T-cell (primary cell): ENCODE measurements at regions of chr6 and their contacts with region 1.

Region 1: DNA sequence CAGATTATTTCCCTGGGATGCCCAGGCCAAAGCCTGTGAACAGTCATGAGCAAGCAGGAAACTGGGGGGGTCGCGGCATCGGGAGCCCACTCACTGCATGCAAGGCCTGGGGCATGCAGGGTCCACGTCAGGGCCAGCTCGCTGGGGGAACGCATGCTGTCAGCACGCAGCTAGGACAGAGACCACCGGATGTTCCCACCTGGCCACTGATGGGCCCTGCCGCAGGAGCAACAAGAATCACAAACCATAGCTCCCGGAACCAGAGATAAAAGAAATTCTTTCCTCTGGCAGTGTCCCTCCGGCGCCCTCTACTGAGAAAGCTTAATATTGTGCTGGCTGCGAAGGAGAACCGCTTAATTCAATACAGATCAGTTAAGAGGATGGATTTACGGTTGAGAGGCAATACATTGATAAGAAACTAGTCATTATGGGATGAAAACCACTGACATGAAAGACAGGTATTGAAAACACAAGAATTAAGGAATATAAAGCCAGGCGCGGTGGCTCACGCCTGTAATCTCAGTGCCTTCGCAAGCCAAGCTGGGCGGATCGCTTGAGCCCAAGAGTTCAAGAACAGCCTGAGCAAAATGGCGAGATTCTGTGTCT is 32.6 kb downstream of the C6orf15 start:
- DNase-seq: peak; percentile 21 to 81 (median 64)
- ATAC-seq: peak; percentile 86 to 93 (median 90)
- H3K4me3 ChIP-seq: peak overlapping the region; percentile 8 to 33
- H3K4me3 Mint-ChIP-seq: peak overlapping the region; percentile 43 to 56 (median 51)
- H3K27ac ChIP-seq: no peak overlapping the region
- H3K27ac Mint-ChIP-seq: no peak overlapping the region
- H3K4me1 ChIP-seq: peaks cover 2 to 8% of the 10 kb centered on the region in 2 experiments
- H3K4me1 Mint-ChIP-seq: peaks cover 7 to 9% (median 8%) of the 10 kb centered on the region in 3 donors
- H3K27me3 ChIP-seq: peaks cover 0 to 8% of the 10 kb centered on the region in 2 experiments
- H3K27me3 Mint-ChIP-seq: no peaks in the 10 kb centered on the region

Region 2: GRCh38 chr6:29602564-29603361 is 1477.0 kb before region 1 on chr6:
- CTCF ChIA-PET with region 1: no interaction called
- POLR2A ChIA-PET with region 1: no interaction called
- DNase-seq: peak in 1 of 35 experiments; percentile 6
- ATAC-seq: no peak
- H3K4me3 ChIP-seq: no peak overlapping the region
- H3K4me3 Mint-ChIP-seq: no peak overlapping the region
- H3K27ac ChIP-seq: no peak overlapping the region
- H3K27ac Mint-ChIP-seq: no peak overlapping the region
- H3K4me1 ChIP-seq: no peaks in the 10 kb centered on the region
- H3K4me1 Mint-ChIP-seq: no peaks in the 10 kb centered on the region
- H3K27me3 ChIP-seq: no peaks in the 10 kb centered on the region
- H3K27me3 Mint-ChIP-seq: peaks cover 0 to 3% of the 10 kb centered on the region in 2 donors

Region 3: DNA sequence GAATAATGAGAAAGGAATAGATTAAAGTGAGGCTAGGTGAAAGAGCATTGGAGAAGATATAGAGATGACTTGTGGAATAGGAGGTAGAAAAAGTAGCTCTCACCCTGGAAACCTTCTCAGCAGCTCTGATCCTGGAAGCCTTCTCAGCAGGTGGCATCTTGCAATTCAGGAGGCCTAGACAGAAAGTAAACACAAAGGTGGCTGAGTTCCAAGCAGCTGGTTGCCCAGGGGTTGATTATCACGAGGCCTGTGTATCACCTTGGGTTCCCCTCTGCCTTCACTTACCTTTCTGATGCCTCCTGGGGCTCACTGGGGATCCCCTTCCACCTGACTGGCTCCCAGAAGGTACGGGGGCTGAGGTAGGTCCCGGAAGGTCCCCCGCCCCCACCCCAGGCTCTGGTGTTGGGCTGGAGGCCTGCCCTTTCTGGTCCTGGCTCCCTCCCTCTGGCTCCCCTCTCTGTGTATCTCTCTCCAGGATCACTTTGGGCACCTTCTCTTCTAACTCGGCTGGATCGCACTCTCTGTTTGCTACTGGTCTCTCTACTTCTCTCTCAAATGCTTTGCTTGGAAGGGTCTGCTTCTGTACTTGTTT is 372.4 kb before region 1 on chr6:
- CTCF ChIA-PET with region 1: no interaction called
- POLR2A ChIA-PET with region 1: no interaction called
- DNase-seq: no peak
- ATAC-seq: no peak
- H3K4me3 ChIP-seq: no peak overlapping the region
- H3K4me3 Mint-ChIP-seq: no peak overlapping the region
- H3K27ac ChIP-seq: no peak overlapping the region
- H3K27ac Mint-ChIP-seq: no peak overlapping the region
- H3K4me1 ChIP-seq: peaks cover 0 to 7% of the 10 kb centered on the region in 2 experiments
- H3K4me1 Mint-ChIP-seq: peaks cover 5 to 12% (median 10%) of the 10 kb centered on the region in 3 donors
- H3K27me3 ChIP-seq: no peaks in the 10 kb centered on the region
- H3K27me3 Mint-ChIP-seq: no peaks in the 10 kb centered on the region

Region 4: GRCh38 chr6:30828027-30828960 is 251.5 kb before region 1 on chr6:
- CTCF ChIA-PET with region 1: interaction called, 3 to 20 read pairs
- POLR2A ChIA-PET with region 1: no interaction called
- DNase-seq: peak; percentile 40 to 86 (median 73)
- ATAC-seq: peak; percentile 72 to 84 (median 74)
- H3K4me3 ChIP-seq: peak overlapping the region; percentile 70 to 71
- H3K4me3 Mint-ChIP-seq: peak overlapping the region; percentile 86 to 93 (median 92)
- H3K27ac ChIP-seq: peak overlapping the region; percentile 27
- H3K27ac Mint-ChIP-seq: peak overlapping the region; percentile 97 to 99
- H3K4me1 ChIP-seq: peaks cover 32 to 54% of the 10 kb centered on the region in 2 experiments
- H3K4me1 Mint-ChIP-seq: peaks cover 74 to 91% (median 84%) of the 10 kb centered on the region in 3 donors
- H3K27me3 ChIP-seq: no peaks in the 10 kb centered on the region
- H3K27me3 Mint-ChIP-seq: no peaks in the 10 kb centered on the region

Region 5: GRCh38 chr6:30914076-30914853 is 165.5 kb before region 1 on chr6 and contains the start of gene VARS2:
- CTCF ChIA-PET with region 1: interaction called, 4 to 18 read pairs
- POLR2A ChIA-PET with region 1: interaction called in 1 of 2 experiments, 3 read pairs
- DNase-seq: peak; percentile 54 to 92 (median 75)
- ATAC-seq: peak; percentile 94 to 97 (median 96)
- H3K4me3 ChIP-seq: peak within 1 kb of the TSS; percentile 73 to 85
- H3K4me3 Mint-ChIP-seq: peak within 1 kb of the TSS; percentile 78 to 96 (median 85)
- H3K27ac ChIP-seq: no peak within 1 kb of the TSS
- H3K27ac Mint-ChIP-seq: peak within 1 kb of the TSS; percentile 85 to 89
- H3K4me1 ChIP-seq: peaks cover 4 to 26% of the 10 kb centered on the region in 2 experiments
- H3K4me1 Mint-ChIP-seq: peaks cover 31 to 38% (median 37%) of the 10 kb centered on the region in 3 donors
- H3K27me3 ChIP-seq: no peaks in the 10 kb centered on the region
- H3K27me3 Mint-ChIP-seq: no peaks in the 10 kb centered on the region
- total RNA-seq, gene VARS2: 25.1 to 55.2 (median 40.9) TPM

Region 6: GRCh38 chr6:30990422-30991086 is 89.2 kb before region 1 on chr6:
- CTCF ChIA-PET with region 1: no interaction called
- POLR2A ChIA-PET with region 1: no interaction called
- DNase-seq: peak in 18 of 35 experiments; percentile 2 to 46 (median 12)
- ATAC-seq: peak; percentile 58 to 75 (median 68)
- H3K4me3 ChIP-seq: peak overlapping the region in 1 of 2 donors; percentile 25
- H3K4me3 Mint-ChIP-seq: peak overlapping the region; percentile 59 to 77 (median 64)
- H3K27ac ChIP-seq: peak overlapping the region; percentile 24
- H3K27ac Mint-ChIP-seq: peak overlapping the region; percentile 50 to 81
- H3K4me1 ChIP-seq: peaks cover 0 to 9% of the 10 kb centered on the region in 2 experiments
- H3K4me1 Mint-ChIP-seq: peaks cover 11 to 14% (median 13%) of the 10 kb centered on the region in 3 donors
- H3K27me3 ChIP-seq: peaks cover 0 to 7% of the 10 kb centered on the region in 2 experiments
- H3K27me3 Mint-ChIP-seq: no peaks in the 10 kb centered on the region

Region 7: DNA sequence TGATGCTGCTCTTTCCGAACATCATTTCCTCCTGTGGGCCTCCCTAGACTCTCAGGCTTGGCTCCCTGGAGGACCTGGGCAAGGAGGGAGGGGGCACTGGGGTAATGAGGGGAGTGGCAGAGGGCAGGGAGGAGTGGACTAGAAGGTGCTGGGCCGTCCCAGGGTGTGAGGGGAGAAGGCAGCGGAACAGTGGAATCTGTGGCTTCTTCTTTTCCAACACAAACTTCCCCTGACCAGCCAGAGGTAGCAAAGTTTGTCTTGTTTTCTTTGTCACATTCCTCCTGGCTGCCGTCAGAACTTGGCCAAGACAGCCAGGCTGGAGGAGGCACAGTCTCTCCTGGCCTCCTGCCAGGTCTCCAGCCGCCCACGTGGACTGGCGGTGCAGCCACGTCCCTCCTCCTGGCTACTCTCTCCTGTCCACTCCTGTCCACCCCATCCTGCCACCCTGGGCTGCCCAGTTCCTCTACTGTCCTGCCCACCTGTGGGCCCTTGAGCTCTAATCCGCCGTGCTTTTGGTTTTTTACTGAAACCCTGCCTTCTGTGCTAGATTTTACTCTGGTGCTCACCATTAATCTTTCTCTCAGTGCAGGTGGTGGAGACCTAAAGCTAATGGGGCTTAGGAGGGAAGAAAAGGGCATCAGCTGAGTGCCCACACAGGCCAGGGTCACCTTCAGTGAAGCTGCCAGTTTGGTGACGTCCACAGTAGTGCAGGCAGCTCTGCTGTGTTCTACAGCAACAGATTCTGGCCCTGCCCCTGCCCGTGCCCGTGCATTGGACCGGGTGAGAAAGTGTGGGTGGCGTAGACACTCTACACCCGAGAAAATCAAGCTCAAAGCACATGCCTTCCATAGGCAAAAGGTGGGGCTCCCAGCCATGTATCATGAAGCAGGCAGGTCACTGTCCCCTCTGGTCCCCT is 43.3 kb after region 1 on chr6:
- CTCF ChIA-PET with region 1: no interaction called
- POLR2A ChIA-PET with region 1: no interaction called
- DNase-seq: no peak
- ATAC-seq: no peak
- H3K4me3 ChIP-seq: no peak overlapping the region
- H3K4me3 Mint-ChIP-seq: no peak overlapping the region
- H3K27ac ChIP-seq: no peak overlapping the region
- H3K27ac Mint-ChIP-seq: no peak overlapping the region
- H3K4me1 ChIP-seq: peaks cover 0 to 3% of the 10 kb centered on the region in 2 experiments
- H3K4me1 Mint-ChIP-seq: peaks cover 3 to 4% (median 4%) of the 10 kb centered on the region in 3 donors
- H3K27me3 ChIP-seq: peaks cover 0 to 32% of the 10 kb centered on the region in 2 experiments
- H3K27me3 Mint-ChIP-seq: peaks cover 2 to 9% of the 10 kb centered on the region in 2 donors